ENCODE measurements at regions of chr22 and their contacts with region 1.

Region 1: GRCh38 chr22:22352371-22353365 is 108.1 kb downstream of the VPREB1 start:
- DNase-seq: no peak
- ATAC-seq: no peak
- H3K4me3 ChIP-seq: no peak overlapping the region
- H3K27ac ChIP-seq: no peak overlapping the region
- H3K4me1 ChIP-seq: no peaks in the 10 kb centered on the region
- H3K27me3 ChIP-seq: peaks cover 0 to 28% (median 5%) of the 10 kb centered on the region in 3 donors
- CTCF ChIP-seq: no peak

Region 2: DNA sequence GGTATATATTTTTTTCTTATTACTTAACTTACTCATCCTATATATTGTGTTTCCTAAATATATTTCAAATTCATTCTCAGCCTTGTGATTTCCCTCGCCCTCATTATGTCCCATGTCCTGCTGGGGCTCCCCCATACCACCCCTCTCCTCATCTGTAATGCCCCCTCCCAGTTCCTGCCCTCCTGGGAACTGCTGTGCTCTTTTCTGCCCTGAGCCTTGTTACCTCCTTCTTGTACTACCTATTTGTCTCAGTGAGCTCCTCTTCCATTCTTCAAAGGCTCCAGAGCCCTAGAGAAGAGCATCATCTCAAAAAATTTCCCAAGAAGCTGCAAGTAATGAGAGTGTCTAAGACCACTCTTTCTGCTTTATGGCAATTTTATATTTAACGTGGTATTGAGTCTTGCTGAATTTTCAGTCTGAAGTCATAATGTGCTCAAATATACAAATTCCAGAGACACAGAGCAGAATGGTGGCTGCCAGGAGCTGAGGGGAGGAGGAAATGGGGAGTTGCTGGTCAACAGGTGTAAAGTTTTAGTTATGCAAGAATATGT is 303.6 kb before region 1 on chr22:
- intact Hi-C with region 1: no loop called
- DNase-seq: no peak
- ATAC-seq: no peak
- H3K4me3 ChIP-seq: no peak overlapping the region
- H3K27ac ChIP-seq: no peak overlapping the region
- H3K4me1 ChIP-seq: no peaks in the 10 kb centered on the region
- H3K27me3 ChIP-seq: peaks cover 0 to 3% (median 2%) of the 10 kb centered on the region in 3 donors
- CTCF ChIP-seq: no peak

Region 3: DNA sequence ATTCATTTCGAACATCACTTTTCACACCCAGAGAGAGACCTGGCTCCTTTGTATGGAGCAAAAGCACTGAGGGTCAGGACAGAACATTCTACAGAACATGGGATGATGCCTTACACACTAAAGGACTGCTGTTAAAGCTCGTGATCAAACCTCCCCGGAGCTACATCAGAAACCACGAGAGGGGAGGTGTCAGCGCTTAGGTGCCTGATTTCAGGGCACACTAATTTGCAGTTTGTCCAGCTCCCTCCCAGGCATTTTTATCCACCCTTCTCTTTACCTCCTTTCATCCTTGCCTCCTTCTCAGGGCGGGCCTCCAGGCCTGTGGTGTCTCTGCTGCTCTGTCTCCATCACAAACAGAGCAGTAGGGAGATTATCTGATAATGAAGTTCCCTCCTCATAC is 19.4 kb after region 1 on chr22:
- intact Hi-C with region 1: loop called in 1 of 2 experiments (anchors 2 kb)
- DNase-seq: no peak
- ATAC-seq: no peak
- H3K4me3 ChIP-seq: no peak overlapping the region
- H3K27ac ChIP-seq: no peak overlapping the region
- H3K4me1 ChIP-seq: no peaks in the 10 kb centered on the region
- H3K27me3 ChIP-seq: peaks cover 0 to 24% (median 0%) of the 10 kb centered on the region in 3 donors
- CTCF ChIP-seq: no peak

Region 4: DNA sequence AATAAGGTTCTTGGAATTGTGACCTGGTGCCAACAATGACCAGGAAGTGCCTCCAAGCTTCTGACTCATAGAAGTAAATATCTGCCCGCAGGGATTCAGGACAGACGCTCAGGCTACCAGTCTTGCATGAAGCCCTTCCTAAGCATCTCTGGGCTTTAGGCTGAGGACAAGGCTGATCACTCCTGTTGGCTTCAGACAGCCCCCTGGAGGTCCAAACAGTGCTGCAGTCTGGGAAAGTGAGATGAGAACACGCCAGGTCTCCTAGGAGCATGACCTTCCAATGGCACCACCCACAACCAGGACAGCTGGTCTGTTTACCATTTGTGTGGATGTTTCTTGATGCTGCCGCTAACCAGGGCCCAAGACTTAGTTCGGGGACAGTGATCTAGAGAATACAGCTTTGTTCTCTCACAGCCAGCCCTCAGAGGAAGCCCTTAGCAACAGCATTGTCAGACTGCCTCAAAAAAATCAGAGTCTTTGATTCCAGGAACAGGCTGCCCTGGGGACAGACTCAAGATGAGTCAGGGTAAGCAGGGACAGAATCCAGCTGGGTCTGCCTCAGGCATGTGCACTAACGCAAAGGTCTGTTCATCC is 44.7 kb after region 1 on chr22:
- intact Hi-C with region 1: loop called (anchors 1 to 5 kb)
- DNase-seq: peak in 1 of 2 donors; percentile 33
- ATAC-seq: peak; percentile 47 to 71 (median 64)
- H3K4me3 ChIP-seq: no peak overlapping the region
- H3K27ac ChIP-seq: no peak overlapping the region
- H3K4me1 ChIP-seq: no peaks in the 10 kb centered on the region
- H3K27me3 ChIP-seq: peaks cover 0 to 22% (median 2%) of the 10 kb centered on the region in 3 donors
- CTCF ChIP-seq: no peak

Region 5: DNA sequence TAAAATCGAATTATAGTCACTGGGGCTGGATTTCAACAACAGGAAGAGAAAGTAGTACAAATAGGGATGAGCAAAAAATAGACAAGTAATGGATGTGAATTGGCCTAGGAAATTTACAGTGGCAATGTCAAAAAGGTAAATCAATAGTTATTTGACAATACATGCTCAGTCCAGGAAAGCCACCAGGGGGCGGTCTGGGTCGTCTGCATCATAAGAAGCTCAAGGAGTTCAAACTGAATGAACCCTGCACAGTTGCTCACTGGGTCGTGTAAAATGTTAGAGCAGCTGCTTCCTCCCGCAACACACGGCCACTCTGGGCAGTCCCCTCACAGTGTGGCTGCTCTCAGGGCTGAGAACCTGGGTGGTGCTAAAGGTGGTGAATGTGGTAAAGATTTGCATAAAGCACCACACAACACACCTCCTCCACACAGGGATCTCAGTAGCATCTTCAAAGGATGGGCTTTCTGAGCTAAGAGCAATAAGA is 70.0 kb after region 1 on chr22:
- intact Hi-C with region 1: no loop called
- DNase-seq: peak; percentile 46 to 67
- ATAC-seq: no peak
- H3K4me3 ChIP-seq: no peak overlapping the region
- H3K27ac ChIP-seq: no peak overlapping the region
- H3K4me1 ChIP-seq: no peaks in the 10 kb centered on the region
- H3K27me3 ChIP-seq: peaks cover 0 to 57% (median 12%) of the 10 kb centered on the region in 3 donors
- CTCF ChIP-seq: peak; percentile 46